ENCODE measurements at regions of chr18 and their contacts with region 1.

Region 1: GRCh38 chr18:48777026-48777743 is 173.6 kb downstream of the SMAD7 start:
- DNase-seq: peak in 41 of 42 donors; percentile 41 to 87 (median 72)

Region 2: DNA sequence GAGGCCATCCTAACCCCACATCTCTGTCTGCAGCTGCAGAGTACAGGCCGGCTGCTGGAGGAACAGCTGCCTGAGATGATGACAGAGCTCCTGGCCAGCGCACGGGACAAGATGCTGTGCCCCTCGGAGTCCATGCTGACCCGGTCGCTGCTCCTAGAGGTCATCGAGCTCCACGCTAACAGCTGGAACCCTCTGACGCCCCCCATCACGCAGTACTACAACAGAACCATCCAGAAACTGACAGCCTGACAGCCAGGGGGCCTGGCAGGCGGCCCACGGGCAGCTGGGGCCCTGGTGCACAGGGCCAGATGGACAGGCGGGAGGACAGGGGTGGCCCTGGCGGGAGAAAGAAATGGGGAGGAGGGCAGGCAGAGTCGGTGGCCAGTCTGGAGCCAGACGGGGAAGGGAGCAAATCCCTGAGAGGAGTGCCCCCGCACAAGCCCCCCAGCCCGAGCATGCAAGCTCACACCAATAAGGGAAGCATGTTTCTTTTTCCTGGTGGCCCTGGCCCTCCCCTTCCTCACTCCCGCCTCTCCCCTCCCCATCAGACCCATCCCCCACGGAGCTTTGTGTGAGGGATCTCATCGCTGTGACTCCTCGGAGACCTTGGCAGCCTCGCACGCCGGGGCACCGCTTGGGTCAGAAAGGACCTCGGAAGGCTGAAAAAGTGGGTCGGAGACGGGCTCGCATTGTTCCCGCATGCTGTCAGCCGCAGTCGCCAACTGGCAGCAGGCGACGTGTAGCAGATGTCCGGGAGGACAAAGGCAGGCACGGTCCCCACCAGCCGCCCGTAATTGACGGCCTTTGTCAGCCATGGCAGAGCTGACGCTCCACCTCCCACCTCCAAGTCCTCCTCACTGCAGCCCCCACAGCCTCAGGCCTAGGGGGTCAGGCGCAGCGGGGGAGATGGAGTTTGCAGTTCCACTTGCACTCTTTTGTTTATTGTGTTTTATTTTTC is 82.4 kb after region 1 on chr18:
- intact Hi-C with region 1: loop called (anchors 10 kb)
- DNase-seq: peak; percentile 79 to 96 (median 91)

Region 3: DNA sequence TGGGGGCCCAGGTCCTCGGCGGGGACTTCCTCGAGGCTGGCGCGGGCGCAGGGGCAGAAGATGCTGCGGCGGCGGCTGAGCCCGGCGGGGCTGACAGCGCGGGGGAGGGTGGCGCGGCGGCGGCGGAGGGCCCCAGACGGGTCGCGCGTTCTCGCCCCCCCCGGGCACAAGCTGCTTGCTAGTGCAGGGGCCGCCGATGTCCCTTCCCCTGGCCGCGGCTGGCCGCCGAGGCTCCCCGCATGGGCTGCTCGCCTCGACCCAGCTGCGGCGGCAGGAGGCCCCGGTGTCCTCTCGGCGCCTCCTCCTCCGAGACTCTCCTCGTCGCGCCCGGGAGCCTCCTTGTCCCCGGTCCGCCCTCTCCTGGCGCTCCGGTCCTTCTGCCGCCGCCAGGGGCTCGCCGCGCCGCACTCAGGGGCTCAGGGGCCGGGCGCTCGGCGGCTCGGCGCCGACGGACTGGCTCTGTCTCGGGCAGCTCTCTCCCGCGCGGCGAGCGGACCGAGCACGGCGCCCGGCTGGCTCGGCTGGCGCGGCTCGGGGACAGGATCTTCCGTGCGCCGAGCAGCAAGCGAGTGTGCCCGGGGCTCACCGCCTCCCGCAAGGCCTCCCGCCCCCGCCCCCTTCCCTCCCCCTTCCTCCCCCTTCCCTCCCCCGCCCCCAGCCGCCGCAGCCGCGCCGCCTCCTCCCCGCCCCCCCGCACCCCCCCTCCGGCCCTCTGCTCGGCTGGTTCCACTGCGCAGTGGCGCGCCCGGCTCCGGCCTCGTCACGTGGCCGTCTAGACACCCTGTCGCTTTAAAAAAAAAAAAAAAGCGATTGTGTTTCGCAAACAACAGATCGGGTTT is 174.5 kb after region 1 on chr18:
- intact Hi-C with region 1: loop called (anchors 5 kb)
- DNase-seq: peak; percentile 64 to 92 (median 84)

Region 4: DNA sequence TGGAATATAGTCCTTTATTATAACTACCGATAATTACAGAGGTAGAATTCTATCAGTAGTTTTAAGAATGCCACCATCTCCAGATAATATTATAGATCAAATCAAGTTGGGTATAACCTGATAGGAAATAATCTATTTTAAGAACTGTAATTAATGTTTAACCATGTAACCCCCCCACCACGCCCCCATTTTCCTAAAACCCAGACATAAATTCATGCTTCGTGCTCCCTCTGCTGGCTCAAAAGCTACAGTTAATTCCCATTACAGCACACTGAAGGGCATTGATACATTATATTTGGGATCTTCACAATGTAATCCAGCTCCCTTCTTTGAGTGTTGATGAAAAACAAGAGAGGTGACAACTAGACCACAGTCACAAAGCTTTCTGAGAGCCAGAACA is 401.6 kb after region 1 on chr18:
- intact Hi-C with region 1: loop called (anchors 5 kb)
- DNase-seq: peak in 31 of 42 donors; percentile 15 to 87 (median 52)

Region 5: GRCh38 chr18:49238433-49239042 is 461.4 kb after region 1 on chr18:
- intact Hi-C with region 1: loop called (anchors 10 kb)
- DNase-seq: peak in 18 of 42 donors; percentile 8 to 70 (median 33)

Region 6: DNA sequence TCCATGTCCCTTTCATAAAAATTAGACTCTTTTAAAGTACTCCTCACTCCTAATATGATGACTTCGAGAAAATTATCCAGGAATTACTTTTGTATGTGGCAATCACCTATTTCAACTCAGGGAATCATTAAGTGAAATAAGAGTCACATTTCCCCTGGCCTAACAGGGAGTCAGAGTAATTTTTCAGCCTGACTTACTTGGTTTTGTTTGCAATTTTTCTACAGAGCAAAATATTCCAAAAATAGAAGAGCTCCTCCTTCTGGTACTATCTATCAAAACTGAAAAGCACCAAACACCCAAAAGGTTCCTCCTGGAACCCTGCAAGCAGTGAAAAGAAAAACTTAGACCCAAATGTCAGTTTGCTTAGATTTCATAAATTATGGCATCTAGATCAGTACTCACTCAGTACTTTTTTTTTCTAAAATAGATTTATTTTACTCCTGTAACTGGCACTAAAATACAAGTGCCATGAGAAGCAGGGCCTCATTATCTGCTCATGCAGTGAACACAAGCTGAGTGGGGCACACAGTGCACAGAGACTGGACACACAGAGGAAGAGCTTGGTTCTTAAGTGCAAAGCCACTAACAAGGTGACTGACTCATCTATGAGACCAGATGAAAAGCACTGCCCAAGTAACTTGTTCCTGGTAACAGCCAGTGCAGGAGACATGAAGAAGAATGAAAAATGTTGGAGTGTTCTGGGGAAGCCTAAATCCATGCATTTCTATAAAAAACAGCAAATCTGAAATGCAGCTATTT is 1007.4 kb after region 1 on chr18:
- intact Hi-C with region 1: no loop called
- DNase-seq: no peak